PC-3 (cell line): ENCODE measurements at regions of chr21 and their contacts with region 1.

Region 1: GRCh38 chr21:21232320-21232719 is 234.1 kb downstream of the NCAM2 start:
- DNase-seq: peak; percentile 17
- ATAC-seq: no peak
- H3K4me3 ChIP-seq: no peak overlapping the region
- H3K27ac ChIP-seq: no peak overlapping the region
- H3K4me1 ChIP-seq: no peaks in the 10 kb centered on the region
- H3K27me3 ChIP-seq: no peaks in the 10 kb centered on the region
- CTCF ChIP-seq: peak; percentile 58

Region 2: DNA sequence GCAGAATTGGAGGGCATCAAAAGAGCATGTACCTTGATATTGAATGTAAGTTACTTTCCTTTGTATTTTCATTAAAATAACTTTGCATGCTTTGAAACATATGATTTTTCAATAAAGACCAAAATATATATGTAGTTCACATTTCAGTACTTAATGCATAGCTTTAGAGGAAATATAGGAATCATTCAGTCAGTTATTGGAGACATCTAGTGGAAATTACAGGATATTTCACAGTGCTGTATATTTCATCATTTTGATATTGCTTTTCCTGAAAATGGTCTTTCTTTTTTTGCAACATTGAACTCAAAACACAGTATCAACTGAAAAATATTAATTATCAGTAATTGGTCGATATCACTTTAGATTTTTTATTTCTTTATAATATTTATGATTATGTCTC is 141.6 kb after region 1 on chr21:
- CTCF ChIA-PET with region 1: interaction called, 3 read pairs
- POLR2A ChIA-PET with region 1: no interaction called
- intact Hi-C with region 1: loop called (anchors 1 kb)
- DNase-seq: no peak
- ATAC-seq: peak; percentile 43; the same call in 1 of the 2 replicates
- H3K4me3 ChIP-seq: no peak overlapping the region
- H3K27ac ChIP-seq: no peak overlapping the region
- H3K4me1 ChIP-seq: no peaks in the 10 kb centered on the region
- H3K27me3 ChIP-seq: no peaks in the 10 kb centered on the region
- CTCF ChIP-seq: peak; percentile 46; the same call in 1 of the 2 replicates

Region 3: DNA sequence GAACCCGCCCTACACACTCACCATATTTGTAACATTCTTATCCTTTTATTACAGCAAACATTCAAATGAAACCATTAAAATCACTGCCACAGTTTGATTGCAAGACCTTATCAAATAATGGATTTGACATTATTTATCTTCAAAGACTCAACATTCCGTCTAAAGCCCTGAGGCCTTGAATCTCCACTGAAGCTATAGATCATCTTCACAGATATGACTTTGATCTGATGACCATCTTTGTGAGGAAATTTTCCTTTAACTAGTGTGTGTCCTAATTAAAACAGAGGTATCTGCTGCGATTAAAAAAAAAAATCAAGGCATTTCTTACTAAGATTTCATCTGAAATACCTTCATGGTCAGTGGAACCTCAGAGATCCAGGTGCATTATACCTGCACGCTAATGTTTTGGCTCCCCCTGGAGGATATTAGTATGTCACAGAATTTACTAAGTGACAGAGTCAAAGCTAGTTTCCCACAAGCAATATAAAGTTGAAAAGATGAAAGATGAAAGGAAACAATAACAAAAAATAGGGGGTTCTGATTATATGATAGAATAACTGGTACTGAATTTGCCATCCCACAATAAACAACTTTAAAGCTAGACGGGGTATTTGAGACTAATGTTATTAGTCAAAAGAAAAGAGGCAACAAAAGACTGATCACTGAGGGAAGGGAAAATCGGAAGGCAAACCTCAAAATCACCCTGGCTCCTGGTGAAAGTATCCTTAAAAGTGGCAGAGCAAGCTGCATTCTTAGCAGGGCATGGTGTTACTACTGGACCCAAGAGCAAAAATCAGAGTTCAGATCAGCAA is 689.3 kb after region 1 on chr21:
- CTCF ChIA-PET with region 1: no interaction called
- POLR2A ChIA-PET with region 1: no interaction called
- intact Hi-C with region 1: loop called (anchors 1 kb)
- DNase-seq: peak; percentile 65
- ATAC-seq: peak; percentile 64
- H3K4me3 ChIP-seq: peak overlapping the region; percentile 33
- H3K27ac ChIP-seq: no peak overlapping the region
- H3K4me1 ChIP-seq: no peaks in the 10 kb centered on the region
- H3K27me3 ChIP-seq: no peaks in the 10 kb centered on the region
- CTCF ChIP-seq: peak; percentile 88